PC-9 (cell line): ENCODE measurements at regions of chr1 and their contacts with region 1.

Region 1: GRCh38 chr1:111755331-111756123 is at the start of gene DDX20:
- DNase-seq: peak; percentile 89 to 96
- H3K4me3 ChIP-seq: peak within 1 kb of the TSS; percentile 92
- H3K27ac ChIP-seq: peak within 1 kb of the TSS; percentile 64
- H3K4me1 ChIP-seq: peaks cover 20% of the 10 kb centered on the region
- H3K27me3 ChIP-seq: no peaks in the 10 kb centered on the region
- CTCF ChIP-seq: peak; percentile 90
- total RNA-seq, gene DDX20: 8.4 and 8.9 TPM in 2 replicates

Region 2: DNA sequence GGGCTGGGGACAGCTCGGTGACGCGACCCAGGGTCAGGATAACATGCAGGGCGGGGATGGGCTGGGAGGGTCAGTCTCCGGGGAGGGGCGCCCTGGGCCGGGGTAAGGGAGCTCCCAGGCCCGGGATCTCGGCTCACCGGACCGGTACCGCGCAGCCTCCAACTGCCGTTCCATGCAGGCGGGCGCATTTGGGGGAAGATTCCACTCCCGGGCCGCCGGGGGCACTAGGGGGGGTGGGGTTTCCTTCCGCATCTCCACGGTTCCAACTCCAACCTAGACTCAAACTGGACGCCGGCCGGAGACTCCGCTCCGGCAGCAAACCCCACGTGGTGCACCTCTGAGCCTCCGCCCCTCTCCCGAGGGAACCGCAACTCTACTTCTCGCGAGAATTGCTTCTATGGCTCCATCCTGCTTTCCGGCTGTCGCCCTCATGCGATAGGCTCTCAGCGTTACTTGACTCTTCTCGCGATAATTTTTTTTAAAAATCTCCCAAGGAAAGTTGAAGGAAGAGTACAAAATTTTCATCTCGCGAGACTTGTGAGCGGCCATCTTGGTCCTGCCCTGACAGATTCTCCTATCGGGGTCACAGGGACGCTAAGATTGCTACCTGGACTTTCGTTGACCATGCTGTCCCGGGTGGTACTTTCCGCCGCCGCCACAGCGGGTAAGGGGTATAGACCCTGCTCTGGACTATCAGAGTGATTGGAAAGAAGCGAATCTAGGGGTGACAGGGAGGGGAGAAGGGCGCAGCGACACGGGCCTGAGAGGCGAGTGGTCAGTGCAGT is 306.4 kb before region 1 on chr1 and contains the starts of genes ATP5PB and WDR77:
- CTCF ChIA-PET with region 1: no interaction called
- POLR2A ChIA-PET with region 1: no interaction called
- intact Hi-C with region 1: loop called (anchors 1 kb)
- DNase-seq: peak; percentile 92 to 100
- H3K4me3 ChIP-seq: peak within 1 kb of the TSS; percentile 85
- H3K27ac ChIP-seq: peak within 1 kb of the TSS; percentile 69
- H3K4me1 ChIP-seq: peaks cover 23% of the 10 kb centered on the region
- H3K27me3 ChIP-seq: no peaks in the 10 kb centered on the region
- CTCF ChIP-seq: no peak
- total RNA-seq, gene ATP5PB: 183 and 212 TPM in 2 replicates
- total RNA-seq, gene WDR77: 20.6 and 23.7 TPM in 2 replicates

Region 3: DNA sequence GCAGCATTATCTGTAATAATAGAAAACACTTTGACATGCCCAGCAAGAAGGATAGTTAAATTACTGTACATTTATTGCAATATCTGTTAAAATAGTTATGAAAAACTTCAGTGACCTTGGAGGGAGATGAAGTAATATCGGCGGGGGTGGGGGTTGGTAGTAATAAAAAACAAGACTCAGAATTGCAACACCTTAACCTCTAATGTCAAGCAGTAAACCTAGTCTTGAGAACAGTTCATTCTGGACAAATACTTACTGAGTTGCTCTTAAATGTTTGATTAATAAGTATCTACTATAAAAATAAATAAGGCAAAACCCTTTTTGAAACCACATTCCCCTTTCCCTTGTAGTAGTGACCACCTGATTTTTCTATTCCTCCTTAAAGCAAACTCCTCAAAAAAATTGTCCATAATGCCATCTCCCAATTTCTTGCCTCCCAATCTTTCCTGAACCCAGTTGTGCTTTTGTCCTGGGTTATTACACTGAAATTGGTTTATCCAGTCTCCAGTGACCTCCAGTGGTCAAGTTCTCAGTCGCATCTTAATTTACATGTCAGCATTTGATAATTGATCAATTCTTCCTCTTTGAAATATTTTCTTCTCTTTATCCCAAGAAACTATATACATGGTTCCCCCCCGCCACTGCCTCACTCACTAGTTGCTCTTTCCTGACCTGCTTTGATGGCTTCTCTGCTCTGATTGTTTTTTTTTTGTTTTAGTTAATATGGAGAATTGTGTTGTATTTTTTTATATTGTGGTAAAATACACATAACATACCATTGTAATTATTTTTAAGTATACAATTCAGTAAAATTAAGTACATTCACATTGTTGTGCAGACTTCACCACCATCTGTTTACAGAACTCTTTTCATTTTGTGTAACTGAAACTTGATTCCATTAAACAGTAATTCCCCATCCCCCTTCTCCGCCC is 99.2 kb before region 1 on chr1:
- CTCF ChIA-PET with region 1: no interaction called
- POLR2A ChIA-PET with region 1: no interaction called
- intact Hi-C with region 1: loop called (anchors 5 kb)
- DNase-seq: peak; percentile 20 to 59
- H3K4me3 ChIP-seq: no peak overlapping the region
- H3K27ac ChIP-seq: no peak overlapping the region
- H3K4me1 ChIP-seq: peaks cover 25% of the 10 kb centered on the region
- H3K27me3 ChIP-seq: no peaks in the 10 kb centered on the region
- CTCF ChIP-seq: peak; percentile 92

Region 4: GRCh38 chr1:111720274-111720976 is 35.1 kb before region 1 on chr1:
- CTCF ChIA-PET with region 1: no interaction called
- POLR2A ChIA-PET with region 1: no interaction called
- intact Hi-C with region 1: loop called (anchors 2 kb)
- DNase-seq: no peak
- H3K4me3 ChIP-seq: no peak overlapping the region
- H3K27ac ChIP-seq: no peak overlapping the region
- H3K4me1 ChIP-seq: peaks cover 16% of the 10 kb centered on the region
- H3K27me3 ChIP-seq: no peaks in the 10 kb centered on the region
- CTCF ChIP-seq: no peak

Region 5: GRCh38 chr1:111739194-111739924 is 16.2 kb before region 1 on chr1 and contains the start of gene INKA2:
- CTCF ChIA-PET with region 1: no interaction called
- POLR2A ChIA-PET with region 1: no interaction called
- intact Hi-C with region 1: loop called (anchors 1 kb)
- DNase-seq: peak; percentile 78 to 84
- H3K4me3 ChIP-seq: peak within 1 kb of the TSS; percentile 54
- H3K27ac ChIP-seq: no peak within 1 kb of the TSS
- H3K4me1 ChIP-seq: peaks cover 13% of the 10 kb centered on the region
- H3K27me3 ChIP-seq: peaks cover 29% of the 10 kb centered on the region; the same call in 1 of the 2 replicates
- CTCF ChIP-seq: no peak
- total RNA-seq, gene INKA2: 0.53 and 1.4 TPM in 2 replicates

Region 6: GRCh38 chr1:112501810-112502641 is 746.5 kb after region 1 on chr1:
- CTCF ChIA-PET with region 1: no interaction called
- POLR2A ChIA-PET with region 1: no interaction called
- intact Hi-C with region 1: no loop called
- DNase-seq: peak; percentile 55 to 70
- H3K4me3 ChIP-seq: peak overlapping the region; percentile 56
- H3K27ac ChIP-seq: no peak overlapping the region
- H3K4me1 ChIP-seq: 0 out of 2 replicates have a peak, but pooled peaks cover 4% of the 10 kb centered on the region
- H3K27me3 ChIP-seq: no peaks in the 10 kb centered on the region
- CTCF ChIP-seq: peak; percentile 72